ENCODE measurements at regions of chr16 and their contacts with region 1.

Region 1: DNA sequence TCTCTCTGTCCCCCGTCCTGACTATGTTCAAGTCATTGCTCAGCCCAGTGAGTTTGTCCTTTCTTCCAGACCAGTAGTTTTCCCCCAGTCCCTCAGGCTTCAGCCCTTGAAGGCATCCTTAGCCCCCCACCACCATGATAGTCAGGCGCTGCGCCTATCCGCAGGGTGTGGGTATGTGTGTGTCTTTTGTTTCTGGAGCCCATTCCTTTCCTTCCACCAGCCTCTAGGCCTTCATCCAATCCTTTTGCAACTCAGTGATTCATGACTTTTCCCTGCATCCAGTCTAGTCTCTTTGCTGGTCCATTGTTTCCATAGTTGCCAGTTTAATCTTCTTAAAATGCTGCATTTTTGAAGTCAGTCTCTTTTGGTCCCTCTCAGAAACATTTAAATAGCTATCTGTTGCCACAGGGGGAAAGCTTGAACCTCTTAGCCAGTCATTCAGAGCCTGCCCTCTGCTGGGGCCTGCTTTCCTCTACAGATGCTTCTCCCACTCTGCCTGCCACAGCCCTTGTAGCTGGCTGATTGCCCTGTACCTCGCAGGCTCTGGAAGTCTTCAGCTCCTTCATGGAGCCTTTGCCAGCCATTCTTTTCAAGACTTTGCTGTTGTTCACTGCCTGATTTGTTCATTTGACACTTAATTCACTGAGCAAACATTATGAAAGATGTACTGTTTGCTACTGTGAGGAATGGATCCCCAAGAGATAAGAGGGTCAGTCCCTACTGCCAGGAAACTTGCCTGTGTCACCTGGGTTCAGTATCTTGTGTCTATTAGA is 55.9 kb upstream of the ADCY7 start:
- DNase-seq: peak; percentile 64
- ATAC-seq: peak; percentile 95
- H3K4me3 Mint-ChIP-seq: no peak overlapping the region
- H3K27ac Mint-ChIP-seq: peak overlapping the region; percentile 68
- H3K4me1 Mint-ChIP-seq: peaks cover 24% of the 10 kb centered on the region
- H3K27me3 Mint-ChIP-seq: no peaks in the 10 kb centered on the region

Region 2: GRCh38 chr16:50024684-50025536 is 185.5 kb before region 1 on chr16 and contains the start of gene CNEP1R1:
- POLR2A ChIA-PET with region 1: interaction called, 13 read pairs
- DNase-seq: peak; percentile 92
- ATAC-seq: peak; percentile 99
- H3K4me3 Mint-ChIP-seq: peak within 1 kb of the TSS; percentile 96
- H3K27ac Mint-ChIP-seq: peak within 1 kb of the TSS; percentile 92
- H3K4me1 Mint-ChIP-seq: peaks cover 15% of the 10 kb centered on the region
- H3K27me3 Mint-ChIP-seq: peaks cover 2% of the 10 kb centered on the region
- total RNA-seq, gene CNEP1R1: 29.0 to 31.7 TPM

Region 3: GRCh38 chr16:50065624-50066481 is 144.6 kb before region 1 on chr16 and contains the start of gene HEATR3:
- POLR2A ChIA-PET with region 1: interaction called, 20 read pairs
- DNase-seq: peak; percentile 97
- ATAC-seq: peak; percentile 89
- H3K4me3 Mint-ChIP-seq: peak within 1 kb of the TSS; percentile 95
- H3K27ac Mint-ChIP-seq: peak within 1 kb of the TSS; percentile 93
- H3K4me1 Mint-ChIP-seq: peaks cover 25% of the 10 kb centered on the region
- H3K27me3 Mint-ChIP-seq: no peaks in the 10 kb centered on the region
- total RNA-seq, gene HEATR3: 19.8 to 20.1 TPM

Region 4: GRCh38 chr16:50251375-50252081 is 41.1 kb after region 1 on chr16:
- POLR2A ChIA-PET with region 1: no interaction called
- DNase-seq: no peak
- ATAC-seq: no peak
- H3K4me3 Mint-ChIP-seq: no peak overlapping the region
- H3K27ac Mint-ChIP-seq: no peak overlapping the region
- H3K4me1 Mint-ChIP-seq: peaks cover 21% of the 10 kb centered on the region
- H3K27me3 Mint-ChIP-seq: peaks cover 11% of the 10 kb centered on the region

Measured in activated naive CD8-positive, alpha-beta T cell treated with anti-CD3 and anti-CD28 coated beads, Interleukin-2, amount 10 ng/mL, durations not matched to agents 7 days and 5 days (primary cell).